ENCODE measurements at regions of chr19 and their contacts with region 1.

Region 1: DNA sequence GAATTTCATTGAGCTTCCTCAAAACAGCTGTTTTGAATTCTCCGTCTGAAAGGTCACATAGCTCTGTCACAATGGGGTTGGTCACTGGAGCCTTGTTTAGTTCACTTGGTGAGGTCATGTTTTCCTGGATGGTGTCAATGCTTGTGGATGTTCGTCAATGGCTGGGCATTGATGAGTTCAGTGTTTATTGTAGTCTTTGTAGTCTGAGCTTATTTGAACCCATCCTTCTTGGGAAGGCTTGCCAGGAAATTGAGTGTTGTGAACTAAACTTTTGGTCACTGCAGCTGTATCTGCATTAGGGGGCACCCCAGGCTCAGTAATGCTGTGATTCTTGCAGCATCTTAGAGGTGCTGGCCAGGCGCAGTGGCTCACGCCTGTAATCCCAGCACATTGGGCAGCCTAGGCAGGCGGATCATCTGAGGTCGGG is 22.0 kb downstream of the BLOC1S3 start:
- DNase-seq: peak; percentile 65
- H3K4me3 ChIP-seq: no peak overlapping the region
- H3K4me3 Mint-ChIP-seq: no peak overlapping the region
- H3K27ac Mint-ChIP-seq: no peak overlapping the region
- H3K4me1 ChIP-seq: no peaks in the 10 kb centered on the region
- H3K4me1 Mint-ChIP-seq: no peaks in the 10 kb centered on the region
- H3K27me3 ChIP-seq: no peaks in the 10 kb centered on the region
- H3K27me3 Mint-ChIP-seq: peaks cover 8% of the 10 kb centered on the region
- CTCF ChIP-seq: peak; percentile 34 to 42

Region 2: DNA sequence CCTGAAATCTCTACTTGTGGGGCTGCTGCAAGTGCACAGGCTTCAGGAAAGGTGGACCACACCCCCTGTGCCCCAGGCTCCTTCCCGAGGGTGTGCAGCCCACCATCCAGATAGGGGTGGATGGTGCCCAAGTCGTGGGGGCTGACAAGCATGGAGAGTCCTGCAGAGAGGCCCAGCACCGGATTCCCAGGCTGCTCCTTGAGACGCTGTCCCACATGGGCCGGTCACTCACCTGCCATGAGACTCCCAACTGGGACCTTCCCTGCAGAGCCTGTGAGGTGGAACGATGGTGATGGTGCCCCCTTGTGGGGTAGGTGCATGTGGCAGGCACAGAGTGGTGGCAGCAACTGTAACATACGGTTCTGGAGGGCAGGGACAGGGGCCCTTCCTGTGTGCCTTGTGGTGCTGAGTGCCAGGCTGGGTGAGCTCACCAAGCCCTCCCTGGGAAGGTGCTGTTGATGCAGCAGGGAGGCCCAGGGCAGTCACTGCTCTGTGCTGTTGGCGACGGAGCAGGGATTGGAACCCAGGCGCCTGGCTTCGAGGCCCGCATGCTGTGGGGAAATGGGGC is 74.6 kb before region 1 on chr19:
- CTCF ChIA-PET with region 1: no interaction called
- POLR2A ChIA-PET with region 1: no interaction called
- intact Hi-C with region 1: no loop called
- DNase-seq: peak; percentile 76 to 84
- H3K4me3 ChIP-seq: no peak overlapping the region
- H3K4me3 Mint-ChIP-seq: no peak overlapping the region
- H3K27ac Mint-ChIP-seq: peak overlapping the region; percentile 17
- H3K4me1 ChIP-seq: peaks cover 12% of the 10 kb centered on the region
- H3K4me1 Mint-ChIP-seq: peaks cover 30% of the 10 kb centered on the region
- H3K27me3 ChIP-seq: no peaks in the 10 kb centered on the region
- H3K27me3 Mint-ChIP-seq: no peaks in the 10 kb centered on the region
- CTCF ChIP-seq: peak; percentile 65 to 82

Region 3: DNA sequence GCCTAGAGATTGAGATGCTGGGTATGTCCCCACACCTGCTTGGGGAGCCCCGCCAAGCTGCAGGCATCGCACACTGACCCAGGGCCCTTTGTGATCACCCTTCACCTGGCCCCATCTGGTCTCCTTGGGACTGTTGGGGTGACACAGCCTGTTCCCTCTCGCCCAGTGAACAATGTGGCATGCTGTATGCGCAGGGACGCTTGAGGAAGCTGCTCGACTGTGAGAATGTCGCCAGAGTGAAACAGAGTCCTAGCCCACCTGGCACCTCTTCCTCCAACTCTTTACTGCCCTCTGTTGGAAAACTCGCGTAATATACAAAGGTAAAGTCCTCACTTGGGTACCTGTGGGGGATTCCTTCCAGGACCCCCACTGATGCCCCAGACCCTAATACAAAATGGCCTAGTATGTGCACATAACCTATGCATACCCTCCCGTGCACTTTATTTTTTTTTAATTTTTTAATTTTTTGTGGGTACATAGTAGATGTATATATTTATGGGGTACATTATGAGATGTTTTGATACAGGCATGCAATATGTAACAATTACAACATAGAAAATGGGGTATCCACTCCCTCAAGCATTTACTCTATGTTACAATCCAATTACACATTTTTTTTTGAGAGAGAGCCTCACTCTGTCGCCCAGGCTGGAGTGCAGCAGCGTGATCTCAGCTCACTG is 13.0 kb before region 1 on chr19:
- CTCF ChIA-PET with region 1: no interaction called
- POLR2A ChIA-PET with region 1: no interaction called
- intact Hi-C with region 1: no loop called
- DNase-seq: peak in 1 of 2 experiments; percentile 43
- H3K4me3 ChIP-seq: no peak overlapping the region
- H3K4me3 Mint-ChIP-seq: no peak overlapping the region
- H3K27ac Mint-ChIP-seq: no peak overlapping the region
- H3K4me1 ChIP-seq: no peaks in the 10 kb centered on the region
- H3K4me1 Mint-ChIP-seq: peaks cover 11% of the 10 kb centered on the region
- H3K27me3 ChIP-seq: no peaks in the 10 kb centered on the region
- H3K27me3 Mint-ChIP-seq: no peaks in the 10 kb centered on the region
- CTCF ChIP-seq: peak; percentile 64 to 76

Region 4: DNA sequence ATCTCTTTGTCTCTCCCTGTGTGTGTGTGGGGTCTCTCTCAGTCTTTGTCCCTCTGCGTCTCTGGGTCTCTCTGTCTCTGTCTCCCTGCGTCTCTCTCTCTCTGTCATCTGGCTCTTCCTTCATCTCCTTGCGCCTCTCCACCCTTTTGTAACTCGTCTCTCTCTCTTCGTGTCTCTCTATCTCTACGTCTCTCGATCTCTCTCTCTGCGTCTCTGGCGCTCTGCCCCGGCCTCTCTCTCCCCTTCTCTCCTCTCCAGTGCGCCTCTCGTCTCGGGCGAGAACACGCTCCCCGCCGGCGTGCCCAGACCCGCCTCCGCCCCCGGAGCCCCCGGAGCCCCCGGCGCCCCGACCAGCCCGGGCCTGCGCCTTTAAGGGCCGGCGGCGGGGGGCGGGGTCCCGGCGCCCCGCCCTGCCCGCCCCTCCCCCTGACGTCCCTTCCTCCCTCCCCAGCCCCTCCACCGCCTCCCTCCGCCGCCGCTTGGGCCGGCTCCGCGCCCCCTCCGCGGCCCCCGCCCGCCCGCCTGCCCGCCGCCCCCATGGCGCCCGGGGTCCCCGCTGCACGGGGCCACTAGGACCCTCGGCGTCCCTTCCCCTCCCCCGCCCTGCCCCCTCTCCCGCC is 50.4 kb after region 1 on chr19 and contains the start of gene MARK4:
- CTCF ChIA-PET with region 1: interaction called, 7 read pairs
- POLR2A ChIA-PET with region 1: no interaction called
- intact Hi-C with region 1: loop called (anchors 1 kb)
- DNase-seq: peak in 1 of 2 experiments; percentile 63
- H3K4me3 ChIP-seq: peak within 1 kb of the TSS; percentile 83
- H3K4me3 Mint-ChIP-seq: peak within 1 kb of the TSS; percentile 84
- H3K27ac Mint-ChIP-seq: peak within 1 kb of the TSS; percentile 58
- H3K4me1 ChIP-seq: peaks cover 3% of the 10 kb centered on the region; the same call in 1 of the 2 replicates
- H3K4me1 Mint-ChIP-seq: peaks cover 7% of the 10 kb centered on the region
- H3K27me3 ChIP-seq: no peaks in the 10 kb centered on the region
- H3K27me3 Mint-ChIP-seq: no peaks in the 10 kb centered on the region
- CTCF ChIP-seq: no peak
- total RNA-seq, gene MARK4: 30.3 and 33.4 TPM in 2 replicates

Region 5: GRCh38 chr19:45478454-45479238 is 278.1 kb after region 1 on chr19:
- CTCF ChIA-PET with region 1: interaction called, 3 read pairs
- POLR2A ChIA-PET with region 1: no interaction called
- intact Hi-C with region 1: loop called (anchors 2 kb)
- DNase-seq: peak; percentile 92 to 94
- H3K4me3 ChIP-seq: peak overlapping the region; percentile 53
- H3K4me3 Mint-ChIP-seq: peak overlapping the region; percentile 53
- H3K27ac Mint-ChIP-seq: peak overlapping the region; percentile 99
- H3K4me1 ChIP-seq: 0 out of 2 replicates have a peak, but pooled peaks cover 4% of the 10 kb centered on the region
- H3K4me1 Mint-ChIP-seq: peaks cover 7% of the 10 kb centered on the region
- H3K27me3 ChIP-seq: no peaks in the 10 kb centered on the region
- H3K27me3 Mint-ChIP-seq: peaks cover 2% of the 10 kb centered on the region
- CTCF ChIP-seq: peak; percentile 94 to 96